PC-9 (cell line): ENCODE measurements at regions of chr1 and their contacts with region 1.

Region 1: GRCh38 chr1:100213141-100213540 is 35.1 kb upstream of the LRRC39 start:
- DNase-seq: no peak
- H3K4me3 ChIP-seq: no peak overlapping the region
- H3K27ac ChIP-seq: no peak overlapping the region
- H3K4me1 ChIP-seq: no peaks in the 10 kb centered on the region
- H3K27me3 ChIP-seq: no peaks in the 10 kb centered on the region
- CTCF ChIP-seq: no peak

Region 2: GRCh38 chr1:100122177-100122576 is 91.0 kb before region 1 on chr1:
- CTCF ChIA-PET with region 1: no interaction called
- POLR2A ChIA-PET with region 1: interaction called, 17 read pairs
- intact Hi-C with region 1: no loop called
- DNase-seq: no peak
- H3K4me3 ChIP-seq: no peak overlapping the region
- H3K27ac ChIP-seq: no peak overlapping the region
- H3K4me1 ChIP-seq: no peaks in the 10 kb centered on the region
- H3K27me3 ChIP-seq: no peaks in the 10 kb centered on the region
- CTCF ChIP-seq: no peak

Region 3: GRCh38 chr1:100347009-100347966 is 134.1 kb after region 1 on chr1:
- CTCF ChIA-PET with region 1: no interaction called
- POLR2A ChIA-PET with region 1: no interaction called
- intact Hi-C with region 1: no loop called
- DNase-seq: peak in 1 of 2 experiments; percentile 28
- H3K4me3 ChIP-seq: no peak overlapping the region
- H3K27ac ChIP-seq: no peak overlapping the region
- H3K4me1 ChIP-seq: peaks cover 7% of the 10 kb centered on the region; the same call in 1 of the 2 replicates
- H3K27me3 ChIP-seq: no peaks in the 10 kb centered on the region
- CTCF ChIP-seq: no peak